A549 (cell line): ENCODE measurements at regions of chr19 and their contacts with region 1.

Region 1: DNA sequence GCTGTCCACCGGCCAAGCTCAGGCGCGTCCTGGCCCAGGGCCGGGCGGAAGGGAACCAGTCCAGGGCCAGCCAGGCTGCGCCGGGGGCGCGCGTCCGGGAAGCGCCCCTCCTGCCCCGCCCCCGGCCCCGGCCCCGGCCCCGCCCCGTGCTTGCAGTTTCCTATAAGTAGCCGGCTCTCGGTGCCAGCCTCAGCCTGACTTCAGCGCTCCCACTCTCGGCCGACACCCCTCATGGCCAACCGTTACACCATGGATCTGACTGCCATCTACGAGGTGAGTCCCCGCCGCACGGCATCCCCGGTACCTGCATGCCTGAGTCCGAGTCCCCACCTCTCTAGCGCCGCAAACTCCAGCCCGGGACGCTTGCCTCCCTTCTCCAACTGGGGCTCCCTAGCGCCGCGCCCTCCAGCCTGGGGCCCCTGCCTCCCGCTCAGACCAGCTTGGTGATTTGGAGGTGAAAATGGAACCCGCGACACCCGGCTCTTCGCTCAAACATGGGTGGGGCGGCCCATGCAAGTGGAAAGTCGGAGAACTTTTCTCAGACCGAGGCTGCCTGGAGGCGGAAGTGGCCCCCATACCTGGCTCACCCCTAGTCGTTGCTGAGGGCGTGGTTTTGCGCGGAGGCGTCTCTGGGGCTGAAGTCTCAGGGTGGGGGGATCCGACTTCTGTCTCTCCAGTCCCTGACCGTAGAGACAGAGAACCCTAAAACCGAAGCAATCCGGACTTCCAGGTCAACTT is at the start of gene ZFP36:
- DNase-seq: peak; percentile 93 to 95
- ATAC-seq: peak; percentile 15 to 37
- H3K4me3 ChIP-seq: peak within 1 kb of the TSS; percentile 76
- H3K27ac ChIP-seq: peak within 1 kb of the TSS; percentile 94 to 99
- H3K4me1 ChIP-seq: peaks cover 70% of the 10 kb centered on the region
- CTCF ChIP-seq: peak; percentile 22; the same call in 1 of the 3 replicates
- EP300 ChIP-seq: no peak
- POLR2A ChIP-seq: peak; percentile 100
- RAD21 ChIP-seq: 0 out of 5 replicates have a peak, but pooled peaks of 1 of the 2 experiments have one; percentile 39
- polyA plus RNA-seq, gene ZFP36: 29.1 and 35.6 TPM in 2 replicates

Region 2: GRCh38 chr19:39390755-39391592 is 15.9 kb before region 1 on chr19 and contains the starts of genes MED29 and PAF1:
- CTCF ChIA-PET with region 1: interaction called, 484 read pairs
- POLR2A ChIA-PET with region 1: interaction called, 122 read pairs
- DNase-seq: peak; percentile 100
- ATAC-seq: peak; percentile 91 to 97
- H3K4me3 ChIP-seq: peak within 1 kb of the TSS; percentile 68
- H3K27ac ChIP-seq: peak within 1 kb of the TSS; percentile 89 to 90
- H3K4me1 ChIP-seq: peaks cover 15% of the 10 kb centered on the region; the same call in 2 of the 3 replicates
- CTCF ChIP-seq: no peak
- EP300 ChIP-seq: no peak
- POLR2A ChIP-seq: peak; percentile 99
- RAD21 ChIP-seq: no peak; a peak in 1 of 5 replicates
- polyA plus RNA-seq, gene MED29: 55.7 and 57.5 TPM in 2 replicates
- polyA plus RNA-seq, gene PAF1: 73.0 and 103 TPM in 2 replicates